Esophagus muscularis mucosa (tissue), 4 donors: ENCODE measurements at regions of chr2 and their contacts with region 1.

Region 1: DNA sequence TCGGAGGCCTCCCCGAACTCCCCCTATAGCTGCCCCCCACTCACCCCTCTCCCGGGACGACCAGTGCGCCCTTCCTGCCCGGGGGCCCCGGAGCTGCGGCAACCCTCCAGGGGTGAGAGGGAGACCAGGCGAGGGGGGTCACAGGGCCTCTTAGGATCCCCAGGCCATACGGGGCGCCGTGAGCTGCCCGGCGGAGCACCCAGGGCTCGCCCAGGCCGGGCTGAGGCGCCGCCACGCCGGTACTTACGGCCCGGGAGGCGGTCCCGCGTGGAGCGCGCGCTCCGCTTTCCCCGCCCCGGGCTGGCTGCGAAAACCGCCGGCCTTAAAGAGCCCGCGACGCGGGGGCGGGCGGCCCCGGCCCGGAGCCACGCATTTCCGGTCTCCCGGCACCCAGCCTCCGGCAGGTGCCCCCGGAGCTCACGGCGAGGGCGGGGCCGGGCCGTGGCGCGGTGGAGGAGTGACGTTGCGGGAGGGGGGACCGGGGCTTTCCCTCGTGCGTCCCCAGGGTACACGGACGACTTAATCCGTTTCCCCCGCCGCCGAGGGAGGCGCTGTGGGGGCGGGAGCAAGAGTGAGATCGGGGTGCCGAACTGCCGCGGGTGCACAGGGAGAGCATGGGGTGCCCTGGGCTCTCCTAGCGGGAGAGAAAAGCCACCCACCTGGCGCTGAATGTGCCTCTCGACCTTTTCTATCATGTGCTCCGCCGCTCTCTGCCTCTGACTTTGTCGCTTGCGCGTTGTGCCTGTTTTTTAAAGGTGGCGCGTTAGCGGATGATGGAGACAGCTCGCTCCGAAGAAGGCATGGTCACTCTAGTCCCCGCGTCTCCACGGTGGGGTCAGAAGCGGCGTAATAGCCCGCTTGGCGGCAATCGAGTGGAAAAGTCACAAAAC is at the start of gene METTL21A:
- DNase-seq: peak; percentile 96
- H3K4me3 ChIP-seq: peak within 1 kb of the TSS; percentile 81 to 93 (median 92)
- H3K27ac ChIP-seq: peak within 1 kb of the TSS; percentile 93 to 98 (median 98)
- H3K4me1 ChIP-seq: peaks cover 15 to 50% (median 35%) of the 10 kb centered on the region in 4 donors
- H3K27me3 ChIP-seq: no peaks in the 10 kb centered on the region
- CTCF ChIP-seq: peak in 1 of 3 experiments; percentile 33
- EP300 ChIP-seq: no peak
- POLR2A ChIP-seq: peak; percentile 47
- total RNA-seq, gene METTL21A: 10.1 to 31.6 (median 22.5) TPM

Region 2: GRCh38 chr2:207529330-207530159 is 95.7 kb before region 1 on chr2 and contains the start of gene CREB1:
- intact Hi-C with region 1: loop called (anchors 5 kb)
- DNase-seq: peak; percentile 99
- H3K4me3 ChIP-seq: peak within 1 kb of the TSS; percentile 56 to 83 (median 76)
- H3K27ac ChIP-seq: peak within 1 kb of the TSS; percentile 86 to 98 (median 92)
- H3K4me1 ChIP-seq: peaks cover 36 to 49% (median 45%) of the 10 kb centered on the region in 4 donors
- H3K27me3 ChIP-seq: no peaks in the 10 kb centered on the region
- CTCF ChIP-seq: peak in 2 of 3 experiments; percentile 7 to 8
- EP300 ChIP-seq: peak; percentile 85
- POLR2A ChIP-seq: peak; percentile 31
- total RNA-seq, gene CREB1: 31.1 to 51.5 (median 43.3) TPM

Region 3: DNA sequence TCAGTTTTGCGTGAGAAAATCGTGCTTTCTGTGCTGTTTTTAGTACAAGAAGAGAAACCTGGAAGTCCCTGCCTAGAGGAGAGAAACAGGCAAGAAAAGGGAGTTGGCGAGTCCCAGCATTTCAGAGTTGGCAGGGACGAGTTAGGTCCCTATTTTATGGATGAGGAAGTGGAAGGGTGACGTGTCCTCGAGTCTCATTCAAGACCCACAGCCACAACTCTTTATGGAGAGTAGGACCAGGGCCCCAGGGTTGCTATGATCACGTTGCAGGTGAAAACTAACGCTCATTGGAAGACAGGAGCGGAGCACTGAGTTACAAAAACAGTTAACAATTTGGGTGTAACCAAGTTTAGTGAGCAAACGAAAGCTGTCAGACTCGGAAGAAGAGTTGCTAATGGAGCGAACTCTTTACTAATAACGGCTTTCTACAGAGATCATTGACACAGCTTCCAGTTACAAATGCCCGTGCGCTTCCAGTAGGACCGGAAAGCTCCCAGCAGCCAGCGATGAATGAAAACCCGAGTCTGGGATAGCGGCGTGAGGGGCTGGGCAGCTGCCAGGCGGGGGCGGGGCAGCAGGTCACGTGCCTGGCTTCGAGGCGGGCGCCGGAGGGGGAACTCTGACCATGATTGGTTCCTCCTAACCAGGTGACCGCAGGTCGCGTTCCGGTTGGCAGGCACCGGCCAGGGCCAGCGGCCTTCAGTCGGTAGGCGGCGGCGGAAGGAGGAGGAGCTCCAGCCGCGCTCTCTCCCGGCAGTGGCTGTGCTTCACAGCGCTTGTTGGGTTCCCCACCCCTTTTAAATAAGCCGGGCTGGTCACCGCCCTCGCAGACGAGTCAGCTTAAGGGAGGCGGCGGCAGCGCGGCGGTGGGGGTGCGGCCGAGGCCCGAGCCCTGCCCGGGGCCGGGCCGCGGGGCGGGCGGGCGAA is 85.8 kb after region 1 on chr2 and contains the start of gene CCNYL1:
- intact Hi-C with region 1: loop called (anchors 5 kb)
- DNase-seq: peak; percentile 99
- H3K4me3 ChIP-seq: peak within 1 kb of the TSS; percentile 80 to 98 (median 90)
- H3K27ac ChIP-seq: peak within 1 kb of the TSS; percentile 91 to 97 (median 94)
- H3K4me1 ChIP-seq: peaks cover 9 to 31% (median 29%) of the 10 kb centered on the region in 4 donors
- H3K27me3 ChIP-seq: no peaks in the 10 kb centered on the region
- CTCF ChIP-seq: peak in 1 of 3 experiments; percentile 38
- EP300 ChIP-seq: no peak
- POLR2A ChIP-seq: peak; percentile 53
- total RNA-seq, gene CCNYL1: 13.5 to 17.4 (median 16.2) TPM

Region 4: GRCh38 chr2:208254871-208255556 is 629.8 kb after region 1 on chr2 and contains the start of gene IDH1:
- intact Hi-C with region 1: loop called (anchors 10 kb)
- DNase-seq: peak; percentile 99
- H3K4me3 ChIP-seq: peak within 1 kb of the TSS; percentile 73 to 88 (median 82)
- H3K27ac ChIP-seq: peak within 1 kb of the TSS; percentile 75 to 90 (median 84)
- H3K4me1 ChIP-seq: peaks cover 18 to 36% (median 24%) of the 10 kb centered on the region in 4 donors
- H3K27me3 ChIP-seq: no peaks in the 10 kb centered on the region
- CTCF ChIP-seq: peak; percentile 29 to 41 (median 33)
- EP300 ChIP-seq: no peak
- POLR2A ChIP-seq: no peak
- total RNA-seq, gene IDH1: 22.0 to 28.0 (median 24.8) TPM